PC-3 (cell line): ENCODE measurements at regions of chr19 and their contacts with region 1.

Region 1: DNA sequence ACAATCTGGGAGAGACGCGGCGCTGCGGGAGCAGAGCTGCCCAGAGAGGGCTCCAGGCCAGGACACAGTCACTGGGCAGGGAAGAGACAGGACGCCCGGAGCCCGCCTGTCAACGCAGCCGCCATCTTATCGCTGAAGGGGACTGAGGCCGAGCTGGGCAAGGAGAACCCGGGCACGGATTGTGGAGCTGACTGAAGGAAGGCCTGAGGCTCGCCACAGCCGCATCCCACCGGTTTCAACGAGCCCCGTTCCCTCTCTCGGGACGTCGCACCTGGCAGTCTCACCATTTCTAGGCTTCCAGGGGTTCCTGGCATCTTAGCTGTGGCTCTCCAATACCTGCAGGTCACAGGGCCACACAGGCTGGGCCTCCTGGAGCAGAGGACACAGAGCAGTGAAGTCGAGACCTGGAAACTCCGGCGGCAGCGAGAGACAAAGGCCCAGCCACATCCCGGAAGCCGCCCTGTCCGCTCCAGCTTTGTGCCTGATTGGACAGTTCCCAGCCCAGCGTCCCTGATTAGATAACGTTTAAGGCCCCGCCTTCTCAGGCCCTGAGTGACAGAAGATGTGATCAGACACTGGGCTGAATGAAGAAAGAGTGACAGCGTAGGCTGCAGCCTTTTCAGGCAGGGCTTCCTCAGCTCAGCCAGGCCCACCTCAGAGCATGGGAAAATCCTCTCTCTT is at the start of gene ZNF91:
- DNase-seq: peak; percentile 97
- ATAC-seq: peak; percentile 89
- H3K4me3 ChIP-seq: peak within 1 kb of the TSS; percentile 92
- H3K27ac ChIP-seq: peak within 1 kb of the TSS; percentile 95
- H3K4me1 ChIP-seq: peaks cover 33% of the 10 kb centered on the region
- H3K27me3 ChIP-seq: no peaks in the 10 kb centered on the region
- CTCF ChIP-seq: no peak
- total RNA-seq, gene ZNF91: 18.7 and 22.2 TPM in 2 replicates

Region 2: GRCh38 chr19:23343434-23344010 is 51.7 kb before region 1 on chr19:
- CTCF ChIA-PET with region 1: no interaction called
- POLR2A ChIA-PET with region 1: no interaction called
- intact Hi-C with region 1: loop called (anchors 10 kb)
- DNase-seq: peak; percentile 25
- ATAC-seq: no peak
- H3K4me3 ChIP-seq: no peak overlapping the region
- H3K27ac ChIP-seq: no peak overlapping the region
- H3K4me1 ChIP-seq: no peaks in the 10 kb centered on the region
- H3K27me3 ChIP-seq: no peaks in the 10 kb centered on the region
- CTCF ChIP-seq: no peak

Region 3: DNA sequence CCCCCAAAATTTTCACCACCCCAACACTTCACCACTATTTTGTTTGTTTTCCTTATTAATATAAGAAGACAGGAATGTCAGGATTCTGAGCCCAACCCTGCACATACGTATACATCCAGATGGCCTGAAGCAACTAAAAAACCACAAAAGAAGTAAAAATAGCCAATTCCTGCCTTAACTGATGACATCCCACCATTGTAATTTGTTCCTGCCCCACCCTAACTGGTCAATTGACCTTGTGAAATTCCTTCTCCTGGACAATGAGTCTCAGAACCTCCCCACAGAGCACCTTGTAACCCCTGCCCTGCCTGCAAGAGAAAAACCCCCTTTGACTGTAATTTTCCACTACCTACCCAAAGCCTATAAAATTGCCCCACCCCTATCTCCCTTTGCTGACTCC is 159.4 kb after region 1 on chr19:
- CTCF ChIA-PET with region 1: no interaction called
- POLR2A ChIA-PET with region 1: interaction called, 4 read pairs
- intact Hi-C with region 1: loop called (anchors 5 kb)
- DNase-seq: peak; percentile 83
- ATAC-seq: peak; percentile 47
- H3K4me3 ChIP-seq: no peak overlapping the region
- H3K27ac ChIP-seq: peak overlapping the region; percentile 96
- H3K4me1 ChIP-seq: peaks cover 47% of the 10 kb centered on the region
- H3K27me3 ChIP-seq: no peaks in the 10 kb centered on the region
- CTCF ChIP-seq: no peak